Dorsolateral prefrontal cortex (tissue), 120 donors: ENCODE measurements at regions of chr1 and their contacts with region 1.

Region 1: DNA sequence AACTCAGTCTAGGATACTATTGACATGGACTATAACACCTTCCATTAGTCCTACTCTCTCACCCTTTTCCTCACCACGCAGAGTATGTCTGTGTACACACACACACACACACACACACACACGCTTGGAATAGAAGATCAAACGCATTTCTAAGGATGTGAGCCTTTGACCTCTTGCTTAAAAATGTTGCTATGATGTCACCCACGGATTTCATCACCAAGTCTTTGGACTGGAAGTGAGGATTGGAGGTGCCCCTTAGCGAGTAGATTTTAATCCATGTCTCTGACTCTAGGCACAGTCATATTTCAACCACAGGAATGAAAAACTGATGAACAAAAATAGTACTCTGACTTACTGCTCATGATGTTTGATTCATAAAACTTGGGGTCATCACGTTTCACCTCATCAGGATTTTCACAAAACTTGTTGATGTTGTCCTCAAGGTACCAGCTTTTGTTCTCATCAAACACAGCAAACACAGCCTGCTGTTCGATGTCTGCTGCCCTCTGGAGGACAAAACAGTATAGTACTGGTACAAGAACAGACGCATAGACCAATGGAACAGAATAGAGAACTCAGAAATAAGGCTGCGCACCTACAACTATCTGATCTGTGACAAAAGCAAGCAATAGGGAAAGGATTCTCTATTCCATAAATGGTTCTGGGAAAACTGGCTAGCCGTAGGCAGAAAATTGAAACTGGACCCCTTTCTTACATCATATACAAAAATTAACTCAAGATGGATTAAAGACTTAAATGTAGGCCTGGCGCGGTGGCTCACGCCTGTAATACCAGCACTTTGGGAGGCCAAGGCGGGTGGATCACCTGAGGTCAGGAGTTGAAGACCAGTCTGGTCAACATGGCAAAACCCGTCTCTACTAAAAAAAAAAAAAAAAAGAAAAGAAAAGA is 39.9 kb downstream of the F5 start:
- DNase-seq: peak in 7 of 10 donors; percentile 23 to 76 (median 54)
- H3K4me3 ChIP-seq: no peak overlapping the region
- H3K27ac ChIP-seq: no peak overlapping the region
- H3K27me3 ChIP-seq: no peaks in the 10 kb centered on the region
- CTCF ChIP-seq: peak; percentile 54 to 93 (median 84)

Region 2: GRCh38 chr1:168603501-168604110 is 942.7 kb before region 1 on chr1:
- intact Hi-C with region 1: loop called (anchors 5 to 10 kb)
- DNase-seq: peak; percentile 66 to 89 (median 80)
- H3K4me3 ChIP-seq: no peak overlapping the region
- H3K27ac ChIP-seq: peak overlapping the region in 3 of 59 donors; percentile 2 to 13 (median 9)
- H3K27me3 ChIP-seq: no peaks in the 10 kb centered on the region
- CTCF ChIP-seq: peak; percentile 25 to 93 (median 85)

Region 3: DNA sequence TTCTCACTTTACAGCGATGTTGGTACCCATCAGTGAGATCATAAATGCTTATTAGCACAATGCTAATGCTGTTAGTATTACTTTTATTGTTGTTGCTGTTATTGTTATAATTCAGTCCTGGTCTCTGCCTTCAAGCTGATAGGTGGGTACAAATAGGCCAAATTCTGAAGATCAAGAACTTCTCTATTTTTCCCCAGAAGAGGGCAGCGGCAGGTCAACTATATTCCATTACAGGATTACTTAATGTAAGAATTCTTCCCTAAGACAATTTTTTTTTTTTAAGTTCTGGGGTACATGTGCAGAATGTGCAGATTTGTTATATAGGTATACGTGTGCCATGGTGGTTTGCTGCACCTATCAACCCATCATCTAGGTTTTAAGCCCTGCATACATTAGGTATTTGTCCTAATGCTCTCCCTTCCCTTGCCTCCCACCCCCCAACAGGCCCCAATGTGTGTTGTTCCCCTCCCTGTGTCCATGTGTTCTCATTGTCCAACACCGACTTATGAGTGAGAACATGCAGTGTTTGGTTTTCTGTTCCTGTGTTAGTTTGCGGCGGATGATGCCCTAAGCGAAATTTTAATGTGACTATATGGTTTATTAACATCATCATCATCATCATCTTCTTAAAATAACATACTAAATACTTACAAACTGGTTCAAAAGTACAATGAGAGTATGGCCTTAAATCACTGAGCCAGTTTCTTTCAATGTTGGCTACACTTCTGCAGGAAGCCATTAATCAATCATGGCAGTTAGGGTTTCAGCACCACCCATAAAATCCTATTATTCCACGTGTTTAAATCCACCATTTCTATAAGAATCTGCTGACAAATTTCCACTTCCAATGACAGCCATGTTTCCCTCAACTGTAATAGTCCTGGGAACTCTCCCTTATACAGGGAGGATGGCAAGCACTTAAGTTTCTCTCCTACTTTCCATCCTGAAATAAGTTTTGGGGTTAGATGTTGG is 79.8 kb before region 1 on chr1:
- intact Hi-C with region 1: loop called in 1 of 2 experiments (anchors 1 kb)
- DNase-seq: no peak
- H3K4me3 ChIP-seq: no peak overlapping the region
- H3K27ac ChIP-seq: no peak overlapping the region
- H3K27me3 ChIP-seq: no peaks in the 10 kb centered on the region
- CTCF ChIP-seq: peak in 54 of 56 donors; percentile 10 to 69 (median 42)

Region 4: GRCh38 chr1:169495046-169495775 is 51.1 kb before region 1 on chr1:
- intact Hi-C with region 1: no loop called
- DNase-seq: no peak
- H3K4me3 ChIP-seq: no peak overlapping the region
- H3K27ac ChIP-seq: no peak overlapping the region
- H3K27me3 ChIP-seq: peaks cover 0 to 2% (median 0%) of the 10 kb centered on the region in 45 donors
- CTCF ChIP-seq: no peak

Region 5: GRCh38 chr1:169809370-169810095 is 263.2 kb after region 1 on chr1:
- intact Hi-C with region 1: loop called in 1 of 2 experiments (anchors 5 kb)
- DNase-seq: no peak
- H3K4me3 ChIP-seq: no peak overlapping the region
- H3K27ac ChIP-seq: no peak overlapping the region
- H3K27me3 ChIP-seq: no peaks in the 10 kb centered on the region
- CTCF ChIP-seq: peak; percentile 53 to 84 (median 68)